Breast epithelium (tissue), 4 donors: ENCODE measurements at regions of chr15 and their contacts with region 1.

Region 1: GRCh38 chr15:68730471-68730919 is 90.2 kb downstream of the ANP32A start:
- DNase-seq: no peak
- H3K4me3 ChIP-seq: no peak overlapping the region
- H3K27ac ChIP-seq: peak overlapping the region; percentile 9 to 33
- H3K4me1 ChIP-seq: no peaks in the 10 kb centered on the region
- H3K27me3 ChIP-seq: no peaks in the 10 kb centered on the region
- CTCF ChIP-seq: peak in 2 of 3 donors; percentile 69 to 71
- POLR2A ChIP-seq: no peak

Region 2: GRCh38 chr15:66923438-66923881 is 1807.0 kb before region 1 on chr15:
- intact Hi-C with region 1: loop called (anchors 10 kb)
- DNase-seq: no peak
- H3K4me3 ChIP-seq: no peak overlapping the region
- H3K27ac ChIP-seq: no peak overlapping the region
- H3K4me1 ChIP-seq: no peaks in the 10 kb centered on the region
- H3K27me3 ChIP-seq: no peaks in the 10 kb centered on the region
- CTCF ChIP-seq: no peak
- POLR2A ChIP-seq: no peak

Region 3: DNA sequence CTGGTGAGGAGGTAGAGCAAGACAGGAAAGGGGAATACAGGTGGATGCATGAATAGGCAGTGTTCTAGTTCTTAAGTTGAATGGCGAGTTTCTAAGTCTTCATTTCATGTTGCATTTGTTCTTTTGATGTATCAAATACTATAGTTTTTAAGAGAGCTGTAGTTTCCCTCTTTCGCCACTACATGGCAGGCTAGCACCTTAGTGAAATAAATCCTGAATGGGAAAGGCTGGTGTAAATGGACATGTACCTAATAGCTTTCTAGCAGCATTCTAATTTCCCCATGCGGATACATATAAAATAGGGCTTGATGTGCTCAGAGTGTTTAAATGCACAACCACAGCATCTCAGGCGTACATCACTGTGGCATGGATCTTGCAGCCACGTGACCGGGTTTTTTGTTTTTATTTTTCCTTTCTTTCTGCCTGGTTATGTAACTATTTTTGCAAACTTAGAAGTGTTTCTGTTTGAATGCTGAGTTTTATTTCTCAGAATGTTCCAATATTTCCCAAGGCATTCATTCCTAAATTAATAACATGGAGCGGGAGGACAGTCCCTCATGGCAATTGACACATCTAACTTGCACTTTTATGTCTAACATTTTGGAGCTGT is 477.5 kb before region 1 on chr15:
- intact Hi-C with region 1: no loop called
- DNase-seq: no peak
- H3K4me3 ChIP-seq: no peak overlapping the region
- H3K27ac ChIP-seq: no peak overlapping the region
- H3K4me1 ChIP-seq: peaks cover 0 to 3% of the 10 kb centered on the region in 2 donors
- H3K27me3 ChIP-seq: no peaks in the 10 kb centered on the region
- CTCF ChIP-seq: peak; percentile 63 to 90 (median 88)
- POLR2A ChIP-seq: no peak

Region 4: DNA sequence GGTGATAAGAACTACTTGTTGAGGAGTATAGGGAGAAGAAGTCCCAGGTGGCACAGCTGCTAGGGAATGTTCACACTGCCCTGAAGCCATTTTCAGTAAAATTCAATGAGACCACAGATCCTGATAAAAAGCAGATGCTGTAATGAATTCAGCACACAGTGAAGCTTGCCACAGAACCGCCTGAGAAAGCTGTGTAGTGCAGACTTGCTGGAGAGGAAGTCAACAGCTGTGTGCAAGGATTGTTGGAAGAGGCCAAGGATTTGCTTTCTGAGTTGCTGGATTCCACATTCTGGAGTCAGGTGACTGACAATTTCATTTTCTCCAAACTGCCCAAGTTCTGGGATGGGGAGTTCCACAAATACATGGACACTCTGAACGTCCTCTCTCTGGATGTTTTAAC is 19.3 kb after region 1 on chr15:
- intact Hi-C with region 1: no loop called
- DNase-seq: no peak
- H3K4me3 ChIP-seq: no peak overlapping the region
- H3K27ac ChIP-seq: peak overlapping the region in 1 of 2 donors; percentile 19
- H3K4me1 ChIP-seq: no peaks in the 10 kb centered on the region
- H3K27me3 ChIP-seq: no peaks in the 10 kb centered on the region
- CTCF ChIP-seq: no peak
- POLR2A ChIP-seq: no peak

Region 5: GRCh38 chr15:69413822-69414700 is 683.6 kb after region 1 on chr15 and contains the start of gene KIF23:
- intact Hi-C with region 1: loop called (anchors 5 kb)
- DNase-seq: peak; percentile 87
- H3K4me3 ChIP-seq: peak within 1 kb of the TSS; percentile 75 to 89 (median 86)
- H3K27ac ChIP-seq: peak within 1 kb of the TSS; percentile 84 to 93
- H3K4me1 ChIP-seq: peaks cover 0 to 5% of the 10 kb centered on the region in 2 donors
- H3K27me3 ChIP-seq: no peaks in the 10 kb centered on the region
- CTCF ChIP-seq: peak in 1 of 3 donors; percentile 4
- POLR2A ChIP-seq: no peak
- total RNA-seq, gene KIF23: 1.6 to 6.4 (median 2.2) TPM